H1 (cell line): ENCODE measurements at regions of chr7 and their contacts with region 1.

Region 1: DNA sequence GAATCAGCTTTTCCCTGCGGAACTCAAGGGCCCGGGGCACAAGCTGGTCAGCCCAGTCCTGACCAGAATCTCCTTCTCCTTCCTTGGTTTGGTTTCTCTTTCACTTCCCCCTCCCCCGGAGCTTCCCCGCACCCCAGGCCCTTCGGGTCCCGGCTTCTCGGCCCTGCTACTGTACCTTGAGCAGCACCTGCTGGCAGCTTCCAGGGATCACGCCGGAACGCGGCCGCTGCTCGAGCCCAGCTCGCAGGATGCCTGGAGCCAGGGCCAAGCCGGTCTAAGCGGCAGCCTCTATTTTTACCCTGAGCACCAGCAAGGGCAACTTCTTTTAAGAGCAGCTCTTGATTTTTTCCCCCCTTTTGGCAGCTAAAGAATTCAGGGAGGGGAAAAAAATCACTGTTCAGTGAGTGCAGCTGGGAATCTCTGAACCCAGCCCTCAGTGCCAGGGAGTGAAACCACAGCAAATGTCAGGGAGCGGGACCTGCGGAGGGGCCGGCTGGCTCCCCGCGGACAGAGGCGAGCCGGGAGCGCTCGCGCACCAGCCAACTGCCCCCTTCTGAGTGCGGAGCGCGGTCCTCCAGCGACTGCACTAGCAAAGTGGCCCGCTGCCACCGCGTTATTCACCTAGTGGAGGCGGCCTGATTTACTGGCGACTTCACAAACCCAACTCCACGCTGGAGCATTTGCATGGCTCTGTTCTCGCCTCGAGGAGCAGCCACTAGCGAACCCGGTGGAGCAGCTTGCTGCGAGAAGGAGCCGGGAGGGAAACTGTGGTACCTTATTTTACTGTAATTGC is 2.4 kb upstream of the INHBA start:
- DNase-seq: peak; percentile 90 to 92
- H3K4me3 ChIP-seq: peak overlapping the region; percentile 23 to 63 (median 54); a peak in 7 of 8 replicates
- H3K27ac ChIP-seq: no peak overlapping the region
- H3K4me1 ChIP-seq: peaks cover 9 to 28% (median 13%) of the 10 kb centered on the region in 4 experiments
- H3K27me3 ChIP-seq: peaks cover 4 to 18% (median 13%) of the 10 kb centered on the region in 4 experiments
- CTCF ChIP-seq: peak; percentile 82 to 90 (median 86)
- EP300 ChIP-seq: peak in 1 of 2 experiments; percentile 30; a peak in 1 of 3 replicates
- POLR2A ChIP-seq: no peak
- RAD21 ChIP-seq: peak; percentile 94 to 97

Region 2: GRCh38 chr7:41003031-41003925 is 702.0 kb before region 1 on chr7:
- CTCF ChIA-PET with region 1: interaction called, 23 read pairs
- POLR2A ChIA-PET with region 1: no interaction called
- DNase-seq: peak; percentile 68 to 86
- H3K4me3 ChIP-seq: no peak overlapping the region
- H3K27ac ChIP-seq: no peak overlapping the region
- H3K4me1 ChIP-seq: peaks cover 0 to 3% (median 1%) of the 10 kb centered on the region in 4 experiments; a peak in 1 of 7 replicates
- H3K27me3 ChIP-seq: no peaks in the 10 kb centered on the region
- CTCF ChIP-seq: peak; percentile 33 to 87 (median 75)
- EP300 ChIP-seq: no peak
- POLR2A ChIP-seq: no peak
- RAD21 ChIP-seq: peak; percentile 77 to 83

Region 3: DNA sequence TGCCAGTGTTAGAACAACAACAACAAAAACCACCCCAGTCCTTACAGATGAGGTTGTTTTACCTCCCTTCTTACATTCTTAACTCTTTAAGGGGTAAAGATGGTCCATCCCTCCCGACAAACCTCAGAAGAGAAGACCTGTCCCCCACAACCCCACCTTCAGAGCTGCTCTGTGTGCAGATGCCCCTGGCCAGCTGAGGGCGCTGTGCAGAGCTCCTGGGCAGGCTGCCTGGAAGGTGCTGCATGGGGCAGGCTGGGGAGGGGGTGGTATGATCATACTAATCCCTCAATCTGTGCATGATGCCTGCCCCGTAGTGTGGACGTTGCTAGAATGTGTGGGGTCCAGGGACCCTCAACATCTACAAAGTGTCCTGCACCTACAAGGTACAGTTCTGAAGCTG is 389.5 kb before region 1 on chr7:
- CTCF ChIA-PET with region 1: interaction called, 11 read pairs
- POLR2A ChIA-PET with region 1: no interaction called
- DNase-seq: peak in 1 of 2 experiments; percentile 83
- H3K4me3 ChIP-seq: no peak overlapping the region
- H3K27ac ChIP-seq: no peak overlapping the region
- H3K4me1 ChIP-seq: peaks cover 0 to 5% (median 4%) of the 10 kb centered on the region in 4 experiments; a peak in 3 of 7 replicates
- H3K27me3 ChIP-seq: no peaks in the 10 kb centered on the region
- CTCF ChIP-seq: peak; percentile 80 to 92 (median 83)
- EP300 ChIP-seq: no peak
- POLR2A ChIP-seq: no peak
- RAD21 ChIP-seq: peak; percentile 73 to 80

Region 4: DNA sequence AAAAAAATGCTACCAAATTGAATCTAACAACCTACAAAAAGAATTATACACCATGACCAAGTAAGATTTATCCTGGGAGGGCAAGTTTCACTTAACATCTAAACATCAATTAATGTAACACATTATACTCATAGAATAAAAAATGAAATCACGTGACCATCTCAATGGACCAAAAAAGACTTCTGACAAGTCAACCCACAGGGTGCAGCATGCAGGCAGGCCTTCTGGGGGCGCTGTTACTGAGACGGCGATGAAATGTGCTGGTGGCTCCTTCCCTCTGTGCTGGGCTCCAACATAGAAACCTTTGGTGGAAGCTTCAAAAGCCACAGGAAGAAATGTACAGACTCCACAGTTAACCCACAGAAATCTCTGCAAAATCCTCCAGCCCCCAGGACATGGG is 105.5 kb before region 1 on chr7:
- CTCF ChIA-PET with region 1: interaction called, 10 read pairs
- POLR2A ChIA-PET with region 1: interaction called, 3 read pairs
- DNase-seq: peak; percentile 58 to 92
- H3K4me3 ChIP-seq: no peak overlapping the region
- H3K27ac ChIP-seq: no peak overlapping the region
- H3K4me1 ChIP-seq: peaks cover 0 to 3% (median 0%) of the 10 kb centered on the region in 4 experiments; a peak in 1 of 7 replicates
- H3K27me3 ChIP-seq: no peaks in the 10 kb centered on the region
- CTCF ChIP-seq: peak; percentile 79 to 95 (median 92)
- EP300 ChIP-seq: no peak
- POLR2A ChIP-seq: no peak
- RAD21 ChIP-seq: peak; percentile 56 to 75

Region 5: GRCh38 chr7:41674505-41675023 is 30.7 kb before region 1 on chr7:
- CTCF ChIA-PET with region 1: no interaction called
- POLR2A ChIA-PET with region 1: no interaction called
- DNase-seq: no peak
- H3K4me3 ChIP-seq: no peak overlapping the region
- H3K27ac ChIP-seq: no peak overlapping the region
- H3K4me1 ChIP-seq: peaks cover 0 to 2% (median 0%) of the 10 kb centered on the region in 4 experiments; a peak in 2 of 7 replicates
- H3K27me3 ChIP-seq: no peaks in the 10 kb centered on the region
- CTCF ChIP-seq: no peak
- EP300 ChIP-seq: no peak
- POLR2A ChIP-seq: no peak
- RAD21 ChIP-seq: no peak

Region 6: GRCh38 chr7:41716691-41717090 is 11.4 kb after region 1 on chr7:
- CTCF ChIA-PET with region 1: interaction called, 19 read pairs
- POLR2A ChIA-PET with region 1: no interaction called
- DNase-seq: no peak
- H3K4me3 ChIP-seq: no peak overlapping the region
- H3K27ac ChIP-seq: no peak overlapping the region
- H3K4me1 ChIP-seq: no peaks in the 10 kb centered on the region
- H3K27me3 ChIP-seq: no peaks in the 10 kb centered on the region
- CTCF ChIP-seq: no peak
- EP300 ChIP-seq: no peak
- POLR2A ChIP-seq: no peak
- RAD21 ChIP-seq: no peak